Activated CD8-positive, alpha-beta T cell treated with anti-CD3 and anti-CD28 coated beads for 36 hours (primary cell): ENCODE measurements at regions of chr10 and their contacts with region 1.

Region 1: GRCh38 chr10:14191871-14192270 is 138.9 kb downstream of the FRMD4A start:
- DNase-seq: no peak
- ATAC-seq: no peak
- H3K4me3 Mint-ChIP-seq: no peak overlapping the region
- H3K27ac Mint-ChIP-seq: no peak overlapping the region
- H3K4me1 Mint-ChIP-seq: no peaks in the 10 kb centered on the region
- H3K27me3 Mint-ChIP-seq: peaks cover 26% of the 10 kb centered on the region
- CTCF ChIP-seq: no peak

Region 2: DNA sequence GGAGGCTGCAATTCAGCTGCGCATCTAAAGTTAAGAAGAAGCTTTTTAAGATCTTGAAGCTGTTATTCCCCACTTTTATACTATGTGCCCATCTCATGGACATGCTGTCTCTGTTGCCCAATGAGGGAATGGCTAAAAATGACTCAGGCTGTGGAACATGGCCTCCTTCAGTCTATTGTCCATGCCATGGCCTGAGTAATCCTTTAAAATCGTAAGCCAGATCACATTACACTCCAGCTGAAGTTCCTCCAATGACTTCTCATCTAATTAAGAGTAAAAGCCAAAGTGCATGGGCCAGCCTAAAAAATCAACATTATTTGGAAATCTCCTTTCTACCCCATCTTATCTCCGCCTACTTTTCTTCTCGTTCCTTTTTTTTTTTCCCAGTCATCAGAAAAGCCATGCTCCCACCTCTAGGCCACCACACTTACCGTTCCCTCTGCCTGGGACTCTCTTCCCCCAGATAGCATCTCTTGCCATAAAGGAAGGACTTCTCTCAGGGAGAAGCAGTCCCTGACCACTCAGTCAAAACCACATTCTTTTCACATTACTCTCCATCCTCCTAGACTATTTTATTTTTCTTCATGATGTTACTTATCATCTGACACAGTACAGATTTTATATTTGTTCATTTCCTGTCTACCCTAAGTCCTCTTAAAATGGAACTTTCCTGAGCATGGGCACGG is 267.7 kb before region 1 on chr10:
- CTCF ChIA-PET with region 1: no interaction called
- POLR2A ChIA-PET with region 1: no interaction called
- intact Hi-C with region 1: no loop called
- DNase-seq: no peak
- ATAC-seq: no peak
- H3K4me3 Mint-ChIP-seq: no peak overlapping the region
- H3K27ac Mint-ChIP-seq: no peak overlapping the region
- H3K4me1 Mint-ChIP-seq: peaks cover 4% of the 10 kb centered on the region
- H3K27me3 Mint-ChIP-seq: peaks cover 2% of the 10 kb centered on the region
- CTCF ChIP-seq: no peak

Region 3: GRCh38 chr10:14325325-14325955 is 133.6 kb after region 1 on chr10:
- CTCF ChIA-PET with region 1: interaction called, 15 read pairs
- POLR2A ChIA-PET with region 1: no interaction called
- intact Hi-C with region 1: no loop called
- DNase-seq: peak; percentile 85
- ATAC-seq: no peak
- H3K4me3 Mint-ChIP-seq: no peak overlapping the region
- H3K27ac Mint-ChIP-seq: no peak overlapping the region
- H3K4me1 Mint-ChIP-seq: no peaks in the 10 kb centered on the region
- H3K27me3 Mint-ChIP-seq: peaks cover 27% of the 10 kb centered on the region
- CTCF ChIP-seq: peak; percentile 69

Region 4: DNA sequence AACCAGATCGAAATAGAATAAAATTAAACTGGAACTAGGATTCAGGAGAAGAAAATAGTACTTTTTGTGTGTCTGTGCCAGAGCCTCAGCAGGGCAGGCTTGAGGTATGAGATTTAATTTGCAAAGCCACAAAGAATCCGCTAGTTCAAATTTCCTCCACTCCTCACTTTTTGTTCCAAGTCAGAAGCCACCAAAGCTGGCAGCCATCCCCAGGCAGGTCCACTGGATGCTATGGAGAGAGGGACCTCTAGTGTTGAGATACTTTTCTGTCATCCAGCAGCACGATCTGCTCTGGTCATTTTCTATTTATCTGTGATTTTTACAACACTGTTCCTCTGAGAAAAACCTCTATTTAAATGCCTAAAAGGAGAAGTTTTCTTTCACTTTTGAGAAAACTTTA is 286.7 kb after region 1 on chr10:
- CTCF ChIA-PET with region 1: interaction called, 24 read pairs
- POLR2A ChIA-PET with region 1: no interaction called
- intact Hi-C with region 1: no loop called
- DNase-seq: peak; percentile 35
- ATAC-seq: peak; percentile 65
- H3K4me3 Mint-ChIP-seq: no peak overlapping the region
- H3K27ac Mint-ChIP-seq: no peak overlapping the region
- H3K4me1 Mint-ChIP-seq: no peaks in the 10 kb centered on the region
- H3K27me3 Mint-ChIP-seq: peaks cover 6% of the 10 kb centered on the region
- CTCF ChIP-seq: peak; percentile 56

Region 5: DNA sequence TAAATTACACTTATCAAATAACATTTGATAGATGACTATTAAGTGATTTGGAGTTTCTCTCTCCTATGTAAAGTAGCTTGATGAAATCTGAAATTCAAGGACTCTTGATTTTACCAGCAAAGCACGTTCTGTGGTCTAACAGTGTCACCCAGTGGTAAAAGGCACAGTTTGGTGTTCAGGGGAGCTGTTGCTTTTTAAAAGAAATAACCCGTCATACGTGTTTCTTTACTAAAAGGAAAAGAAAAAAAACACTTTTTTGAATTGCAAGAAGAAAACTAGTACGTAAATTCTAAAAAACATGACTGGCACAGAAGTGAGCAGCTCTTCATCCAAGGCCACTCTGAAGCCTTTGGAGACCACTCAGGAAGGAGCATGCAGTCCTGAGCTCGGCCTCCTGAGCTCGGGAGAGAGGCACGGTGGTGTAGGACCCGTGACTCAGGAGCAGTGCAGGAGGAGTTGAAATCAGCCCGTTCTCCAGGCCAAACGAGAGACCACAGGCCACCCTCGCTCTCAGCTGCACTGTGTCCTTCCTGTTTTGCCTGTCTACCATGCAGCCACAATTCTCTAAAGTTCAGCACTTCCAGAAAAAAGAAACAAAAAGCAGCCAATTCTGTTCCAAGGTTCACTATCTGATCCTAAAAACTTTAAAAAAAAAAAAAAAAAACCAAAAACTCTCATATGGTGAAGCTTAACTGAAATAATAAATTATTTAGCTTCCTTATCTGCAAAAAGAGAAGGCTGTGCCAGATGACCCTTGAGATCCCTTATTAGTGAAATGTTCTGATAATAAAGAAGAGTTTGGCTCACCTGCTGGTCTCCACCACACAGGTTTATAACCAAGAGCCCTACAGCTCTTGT is 351.4 kb after region 1 on chr10:
- CTCF ChIA-PET with region 1: interaction called, 18 read pairs
- POLR2A ChIA-PET with region 1: no interaction called
- intact Hi-C with region 1: no loop called
- DNase-seq: peak; percentile 60
- ATAC-seq: peak; percentile 74
- H3K4me3 Mint-ChIP-seq: peak overlapping the region; percentile 58
- H3K27ac Mint-ChIP-seq: peak overlapping the region; percentile 88
- H3K4me1 Mint-ChIP-seq: peaks cover 83% of the 10 kb centered on the region
- H3K27me3 Mint-ChIP-seq: no peaks in the 10 kb centered on the region
- CTCF ChIP-seq: peak; percentile 32